WTC11 (cell line): ENCODE measurements at regions of chr4 and their contacts with region 1.

Region 1: DNA sequence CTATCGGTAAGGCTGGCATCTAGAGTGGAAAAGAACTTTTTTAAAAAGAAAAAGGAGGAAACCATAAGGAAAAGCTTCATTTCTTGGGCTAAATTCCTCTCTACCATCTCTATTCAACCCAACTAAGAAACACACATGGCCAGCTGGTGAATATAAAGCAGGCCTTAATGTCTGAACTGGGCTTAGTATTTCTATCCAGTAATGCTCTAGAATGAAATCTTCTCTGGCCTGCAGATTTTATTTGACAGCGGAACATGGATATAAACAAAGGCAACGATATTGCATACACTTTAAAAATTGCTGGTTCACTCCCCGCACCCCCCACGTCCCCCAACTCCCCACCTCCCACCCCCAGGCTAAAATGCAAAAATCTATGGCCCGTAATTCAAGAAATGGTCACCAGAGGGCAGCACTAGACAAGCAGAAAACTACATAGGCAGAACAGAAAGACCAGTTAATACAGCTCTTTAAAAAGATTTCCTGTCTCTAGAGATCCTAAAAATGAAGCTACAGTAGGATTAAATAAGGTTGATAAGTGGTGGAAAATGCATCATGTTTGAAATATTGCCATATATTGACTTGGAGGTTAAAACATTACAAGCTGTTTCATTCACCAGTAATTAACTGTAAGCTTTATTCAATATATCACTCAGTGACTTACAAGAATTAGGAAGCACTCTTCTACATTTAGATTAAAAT is 155.2 kb upstream of the GALNT7 start:
- DNase-seq: peak; percentile 66
- ATAC-seq: peak; percentile 23
- H3K4me3 Mint-ChIP-seq: no peak overlapping the region
- H3K27ac Mint-ChIP-seq: no peak overlapping the region
- H3K4me1 Mint-ChIP-seq: peaks cover 39% of the 10 kb centered on the region
- H3K27me3 Mint-ChIP-seq: no peaks in the 10 kb centered on the region
- CTCF ChIP-seq: peak; percentile 77

Region 2: GRCh38 chr4:172830295-172830764 is 183.1 kb before region 1 on chr4:
- CTCF ChIA-PET with region 1: no interaction called
- POLR2A ChIA-PET with region 1: no interaction called
- DNase-seq: no peak
- ATAC-seq: no peak
- H3K4me3 Mint-ChIP-seq: no peak overlapping the region
- H3K27ac Mint-ChIP-seq: no peak overlapping the region
- H3K4me1 Mint-ChIP-seq: no peaks in the 10 kb centered on the region
- H3K27me3 Mint-ChIP-seq: no peaks in the 10 kb centered on the region
- CTCF ChIP-seq: peak; percentile 63

Region 3: DNA sequence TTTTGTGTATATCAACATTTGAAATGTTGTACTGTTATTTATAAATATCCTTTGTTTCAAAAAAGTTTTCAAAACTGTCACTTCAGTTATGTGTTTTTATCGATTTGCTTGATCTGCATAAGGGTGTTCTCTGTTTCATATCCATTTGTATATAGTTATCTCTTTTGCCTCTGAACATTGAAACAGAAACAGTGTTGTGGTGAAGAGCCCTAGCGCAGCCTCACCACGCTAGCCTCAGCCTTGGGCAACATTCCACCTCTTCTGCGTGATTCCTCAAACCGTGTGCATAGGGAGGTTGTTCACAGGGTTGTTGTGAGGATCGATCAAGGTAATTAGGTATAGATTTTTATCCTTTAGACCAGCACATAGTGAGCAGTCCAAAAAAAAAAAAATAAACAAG is 131.7 kb before region 1 on chr4:
- CTCF ChIA-PET with region 1: no interaction called
- POLR2A ChIA-PET with region 1: no interaction called
- DNase-seq: no peak
- ATAC-seq: no peak
- H3K4me3 Mint-ChIP-seq: no peak overlapping the region
- H3K27ac Mint-ChIP-seq: no peak overlapping the region
- H3K4me1 Mint-ChIP-seq: no peaks in the 10 kb centered on the region
- H3K27me3 Mint-ChIP-seq: no peaks in the 10 kb centered on the region
- CTCF ChIP-seq: no peak

Region 4: GRCh38 chr4:172986114-172986513 is 27.3 kb before region 1 on chr4:
- CTCF ChIA-PET with region 1: interaction called, 10 read pairs
- POLR2A ChIA-PET with region 1: no interaction called
- DNase-seq: no peak
- ATAC-seq: peak; percentile 76
- H3K4me3 Mint-ChIP-seq: no peak overlapping the region
- H3K27ac Mint-ChIP-seq: peak overlapping the region; percentile 69
- H3K4me1 Mint-ChIP-seq: peaks cover 31% of the 10 kb centered on the region
- H3K27me3 Mint-ChIP-seq: no peaks in the 10 kb centered on the region
- CTCF ChIP-seq: no peak

Region 5: GRCh38 chr4:173168396-173169177 is 155.2 kb after region 1 on chr4 and contains the start of gene GALNT7:
- CTCF ChIA-PET with region 1: interaction called, 26 read pairs
- POLR2A ChIA-PET with region 1: interaction called, 5 read pairs
- DNase-seq: peak; percentile 87
- ATAC-seq: peak; percentile 81
- H3K4me3 Mint-ChIP-seq: peak within 1 kb of the TSS; percentile 88
- H3K27ac Mint-ChIP-seq: peak within 1 kb of the TSS; percentile 98
- H3K4me1 Mint-ChIP-seq: peaks cover 50% of the 10 kb centered on the region
- H3K27me3 Mint-ChIP-seq: no peaks in the 10 kb centered on the region
- CTCF ChIP-seq: no peak
- total RNA-seq, gene GALNT7: 79.9 to 86.9 TPM (median 82.8 TPM) in 3 replicates

Region 6: DNA sequence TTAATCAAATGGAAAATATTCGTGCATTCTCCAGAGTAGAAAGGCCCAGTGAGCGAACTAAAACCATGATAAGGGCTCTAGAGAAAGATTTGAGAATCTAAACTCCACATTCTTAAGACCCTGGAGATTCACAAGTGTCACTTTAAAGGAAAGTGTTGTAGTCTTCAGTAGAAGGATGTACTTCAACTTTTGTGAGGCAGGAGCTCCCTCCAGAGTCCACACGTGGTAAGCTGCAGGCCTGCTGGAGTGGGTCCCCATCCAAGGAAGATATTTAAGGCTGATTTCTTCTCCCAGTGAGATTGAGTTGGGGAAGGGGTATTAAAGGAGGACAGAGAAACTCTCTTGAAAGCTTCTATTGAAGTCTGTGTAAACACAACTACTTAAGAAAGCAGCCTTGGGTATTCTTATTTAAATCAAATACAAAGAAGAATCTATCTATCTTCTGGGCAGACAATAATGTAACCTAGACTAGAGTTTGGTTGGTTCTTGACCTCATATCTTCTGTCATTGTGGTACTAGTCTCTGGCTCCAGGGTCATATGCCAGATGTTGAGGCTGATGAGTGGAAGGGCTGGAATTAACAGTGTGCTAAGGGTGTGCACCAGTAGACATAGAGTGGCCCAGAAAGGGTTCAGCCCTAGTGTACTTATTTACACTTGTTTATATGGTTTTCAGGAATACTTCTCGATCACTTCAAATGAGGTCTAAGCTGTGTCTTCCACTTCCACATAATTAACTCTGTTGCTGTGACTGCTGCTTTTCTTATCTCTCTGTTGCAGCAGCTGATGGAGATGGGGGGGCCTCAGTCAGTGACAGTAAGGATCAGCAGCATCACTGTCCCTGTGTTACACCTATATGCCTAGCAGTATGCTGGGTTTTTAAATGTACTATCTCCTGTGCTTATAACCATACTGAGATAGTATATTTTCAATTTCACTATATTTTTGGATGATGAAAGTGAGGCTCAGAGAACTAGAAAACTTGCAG is 244.6 kb after region 1 on chr4:
- CTCF ChIA-PET with region 1: interaction called, 133 read pairs
- POLR2A ChIA-PET with region 1: interaction called, 3 read pairs
- DNase-seq: peak; percentile 77
- ATAC-seq: peak; percentile 96
- H3K4me3 Mint-ChIP-seq: no peak overlapping the region; the same call in 1 of the 2 replicates
- H3K27ac Mint-ChIP-seq: peak overlapping the region; percentile 77
- H3K4me1 Mint-ChIP-seq: peaks cover 48% of the 10 kb centered on the region
- H3K27me3 Mint-ChIP-seq: no peaks in the 10 kb centered on the region
- CTCF ChIP-seq: peak; percentile 51

Region 7: GRCh38 chr4:173307778-173308177 is 294.4 kb after region 1 on chr4:
- CTCF ChIA-PET with region 1: interaction called, 15 read pairs
- POLR2A ChIA-PET with region 1: no interaction called
- DNase-seq: no peak
- ATAC-seq: peak; percentile 41; the same call in 1 of the 2 replicates
- H3K4me3 Mint-ChIP-seq: no peak overlapping the region
- H3K27ac Mint-ChIP-seq: no peak overlapping the region; the same call in 1 of the 2 replicates
- H3K4me1 Mint-ChIP-seq: peaks cover 15% of the 10 kb centered on the region
- H3K27me3 Mint-ChIP-seq: no peaks in the 10 kb centered on the region
- CTCF ChIP-seq: no peak

Region 8: DNA sequence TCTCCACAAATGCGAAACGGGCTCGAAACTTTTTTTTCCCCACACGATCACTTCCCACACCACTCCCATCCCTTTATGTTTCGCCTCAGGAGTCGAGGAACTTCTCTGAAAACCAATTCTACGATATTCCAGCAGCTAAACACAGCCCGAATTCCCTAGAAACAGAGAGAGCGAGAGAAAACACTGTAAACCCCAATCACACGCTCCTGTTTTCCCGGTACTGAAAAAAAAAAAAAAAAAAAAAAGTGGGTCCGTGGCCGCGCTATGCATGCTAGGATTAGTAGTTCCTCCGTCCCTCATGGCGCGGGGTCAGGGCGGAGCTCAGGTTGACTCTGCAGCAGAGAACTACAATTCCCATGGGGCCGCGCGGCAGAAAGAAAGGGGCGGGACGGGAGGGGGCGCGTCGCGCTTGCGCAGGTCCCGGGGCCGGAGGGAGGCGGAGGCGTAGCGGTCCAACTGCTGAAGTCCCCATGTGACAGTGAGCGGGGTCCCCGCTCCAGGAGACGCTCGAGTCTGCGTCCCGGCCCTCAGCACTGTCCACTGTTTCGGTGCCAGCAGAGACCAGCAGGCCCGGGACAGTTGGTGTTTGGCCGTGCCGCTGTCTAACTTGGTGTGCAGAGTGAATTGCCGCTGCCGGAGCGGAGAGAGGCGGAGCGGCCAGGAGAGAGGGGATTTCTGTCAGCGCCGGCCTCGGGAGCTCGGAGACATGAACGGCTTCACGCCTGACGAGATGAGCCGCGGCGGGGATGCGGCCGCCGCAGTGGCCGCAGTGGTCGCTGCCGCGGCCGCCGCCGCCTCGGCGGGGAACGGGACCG is 357.3 kb after region 1 on chr4 and contains the start of gene SAP30:
- CTCF ChIA-PET with region 1: interaction called, 18 read pairs
- POLR2A ChIA-PET with region 1: interaction called, 6 read pairs
- DNase-seq: peak; percentile 98
- ATAC-seq: peak; percentile 86
- H3K4me3 Mint-ChIP-seq: peak within 1 kb of the TSS; percentile 100
- H3K27ac Mint-ChIP-seq: peak within 1 kb of the TSS; percentile 100
- H3K4me1 Mint-ChIP-seq: peaks cover 22% of the 10 kb centered on the region
- H3K27me3 Mint-ChIP-seq: peaks cover 7% of the 10 kb centered on the region
- CTCF ChIP-seq: no peak
- total RNA-seq, gene SAP30: 20.0 to 21.1 TPM (median 20.0 TPM) in 3 replicates